Left colon (tissue), 2 donors: ENCODE measurements at regions of chr12 and their contacts with region 1.

Region 1: GRCh38 chr12:56987551-56988053 is 18.7 kb downstream of the ZBTB39 start:
- DNase-seq: peak; percentile 59 to 80
- ATAC-seq: peak; percentile 84

Region 2: GRCh38 chr12:56759263-56759908 is 228.2 kb before region 1 on chr12:
- intact Hi-C with region 1: loop called in 1 of 2 experiments (anchors 5 kb)
- DNase-seq: no peak
- ATAC-seq: peak; percentile 19